Endothelial cell of umbilical vein (primary cell): ENCODE measurements at regions of chr2 and their contacts with region 1.

Region 1: GRCh38 chr2:191555092-191555742 is 122.7 kb upstream of the NABP1 start:
- DNase-seq: peak; percentile 80
- H3K4me3 ChIP-seq: no peak overlapping the region
- H3K27ac ChIP-seq: no peak overlapping the region
- H3K4me1 ChIP-seq: peaks cover 8% of the 10 kb centered on the region
- H3K27me3 ChIP-seq: peaks cover 3 to 7% of the 10 kb centered on the region in 2 experiments
- CTCF ChIP-seq: peak; percentile 65 to 69
- POLR2A ChIP-seq: no peak

Region 2: DNA sequence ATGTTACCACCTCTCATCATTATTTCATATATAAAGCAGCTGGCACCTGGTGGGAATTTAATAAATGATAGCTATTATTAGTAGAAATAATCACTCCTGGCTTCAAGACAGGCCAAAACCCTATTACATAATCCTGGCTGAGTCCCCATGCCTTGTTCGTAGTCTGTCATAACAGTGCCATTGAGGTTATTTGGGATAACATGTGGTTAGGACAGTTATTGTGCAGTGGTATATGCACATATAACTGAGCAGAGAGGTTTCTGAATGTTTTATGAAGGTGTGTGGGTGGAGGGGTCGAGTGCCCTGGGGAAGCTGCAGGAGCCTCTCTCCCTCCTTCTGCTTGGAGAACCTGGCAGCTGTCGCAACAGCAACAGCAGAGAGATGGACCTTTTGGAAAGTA is 39.7 kb before region 1 on chr2:
- CTCF ChIA-PET with region 1: no interaction called
- POLR2A ChIA-PET with region 1: no interaction called
- dilution Hi-C with region 1: no loop called
- intact Hi-C with region 1: no loop called
- DNase-seq: no peak
- H3K4me3 ChIP-seq: no peak overlapping the region
- H3K27ac ChIP-seq: no peak overlapping the region
- H3K4me1 ChIP-seq: no peaks in the 10 kb centered on the region
- H3K27me3 ChIP-seq: peaks cover 3 to 12% of the 10 kb centered on the region in 2 experiments
- CTCF ChIP-seq: no peak
- POLR2A ChIP-seq: no peak

Region 3: GRCh38 chr2:191566344-191566743 is 11.1 kb after region 1 on chr2:
- CTCF ChIA-PET with region 1: interaction called, 11 read pairs
- POLR2A ChIA-PET with region 1: no interaction called
- dilution Hi-C with region 1: no loop called
- intact Hi-C with region 1: no loop called
- DNase-seq: peak; percentile 54
- H3K4me3 ChIP-seq: no peak overlapping the region
- H3K27ac ChIP-seq: no peak overlapping the region
- H3K4me1 ChIP-seq: peaks cover 3% of the 10 kb centered on the region
- H3K27me3 ChIP-seq: peaks cover 6 to 16% of the 10 kb centered on the region in 2 experiments
- CTCF ChIP-seq: peak; percentile 64 to 82
- POLR2A ChIP-seq: no peak

Region 4: GRCh38 chr2:191713837-191714236 is 158.6 kb after region 1 on chr2:
- CTCF ChIA-PET with region 1: no interaction called
- POLR2A ChIA-PET with region 1: no interaction called
- dilution Hi-C with region 1: loop called (anchors 25 kb)
- intact Hi-C with region 1: no loop called
- DNase-seq: no peak
- H3K4me3 ChIP-seq: no peak overlapping the region
- H3K27ac ChIP-seq: no peak overlapping the region
- H3K4me1 ChIP-seq: no peaks in the 10 kb centered on the region
- H3K27me3 ChIP-seq: peaks cover 0 to 3% of the 10 kb centered on the region in 2 experiments
- CTCF ChIP-seq: peak in 1 of 2 donors; percentile 5
- POLR2A ChIP-seq: no peak

Region 5: GRCh38 chr2:192194866-192195547 is 639.8 kb after region 1 on chr2 and contains the start of gene TMEFF2:
- CTCF ChIA-PET with region 1: interaction called, 3 read pairs
- POLR2A ChIA-PET with region 1: no interaction called
- dilution Hi-C with region 1: no loop called
- intact Hi-C with region 1: loop called (anchors 10 kb)
- DNase-seq: peak; percentile 61
- H3K4me3 ChIP-seq: peak within 1 kb of the TSS; percentile 38 to 75 (median 43)
- H3K27ac ChIP-seq: no peak within 1 kb of the TSS
- H3K4me1 ChIP-seq: peaks cover 27% of the 10 kb centered on the region
- H3K27me3 ChIP-seq: peaks cover 48 to 89% of the 10 kb centered on the region in 2 experiments
- CTCF ChIP-seq: peak; percentile 24 to 32
- POLR2A ChIP-seq: no peak
- total RNA-seq, gene TMEFF2: 0.12 and 0.20 TPM in 2 replicates